Psoas muscle (tissue), 8 donors: ENCODE measurements at regions of chr2 and their contacts with region 1.

Region 1: DNA sequence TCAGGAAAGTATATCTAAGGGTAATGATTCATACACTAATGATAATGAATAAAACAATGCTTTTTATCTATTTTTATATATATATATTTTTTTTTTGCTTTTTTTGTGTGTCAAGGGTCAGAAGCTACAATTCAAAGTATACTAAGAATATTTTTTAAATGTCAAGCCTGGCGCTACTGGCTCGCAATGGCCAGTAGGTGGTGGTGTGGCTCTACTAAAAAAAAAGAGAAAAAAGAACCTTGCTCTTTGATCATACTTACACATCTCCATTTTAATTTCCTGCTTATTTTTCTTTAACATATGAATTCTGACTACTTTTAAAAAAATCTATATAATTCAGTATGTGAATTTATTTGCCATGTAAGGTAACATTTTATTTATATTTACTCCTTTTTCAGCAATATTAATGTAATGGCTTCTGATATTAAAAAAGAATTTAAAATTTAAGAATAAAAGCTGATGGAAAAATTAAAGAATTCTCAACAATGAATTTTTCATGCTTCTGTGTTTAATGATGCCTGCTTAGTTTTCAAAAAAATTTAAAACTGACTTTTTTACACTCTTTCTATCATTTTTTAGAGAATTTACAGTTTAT is 232.9 kb downstream of the GULP1 start:
- DNase-seq: no peak
- ATAC-seq: peak in 2 of 4 donors; percentile 51 to 56
- H3K4me3 ChIP-seq: no peak overlapping the region
- H3K27ac ChIP-seq: no peak overlapping the region
- H3K4me1 ChIP-seq: no peaks in the 10 kb centered on the region
- H3K27me3 ChIP-seq: no peaks in the 10 kb centered on the region
- CTCF ChIP-seq: peak; percentile 80

Region 2: GRCh38 chr2:188441288-188441947 is 83.2 kb before region 1 on chr2:
- intact Hi-C with region 1: no loop called
- DNase-seq: no peak
- ATAC-seq: no peak
- H3K4me3 ChIP-seq: no peak overlapping the region
- H3K27ac ChIP-seq: no peak overlapping the region
- H3K4me1 ChIP-seq: no peaks in the 10 kb centered on the region
- H3K27me3 ChIP-seq: no peaks in the 10 kb centered on the region
- CTCF ChIP-seq: no peak

Region 3: GRCh38 chr2:188607239-188607883 is 82.7 kb after region 1 on chr2:
- intact Hi-C with region 1: no loop called
- DNase-seq: no peak
- ATAC-seq: no peak
- H3K4me3 ChIP-seq: no peak overlapping the region
- H3K27ac ChIP-seq: no peak overlapping the region
- H3K4me1 ChIP-seq: no peaks in the 10 kb centered on the region
- H3K27me3 ChIP-seq: no peaks in the 10 kb centered on the region
- CTCF ChIP-seq: no peak

Region 4: GRCh38 chr2:188645986-188646385 is 121.4 kb after region 1 on chr2:
- intact Hi-C with region 1: no loop called
- DNase-seq: no peak
- ATAC-seq: no peak
- H3K4me3 ChIP-seq: no peak overlapping the region
- H3K27ac ChIP-seq: no peak overlapping the region
- H3K4me1 ChIP-seq: no peaks in the 10 kb centered on the region
- H3K27me3 ChIP-seq: no peaks in the 10 kb centered on the region
- CTCF ChIP-seq: no peak

Region 5: GRCh38 chr2:188678882-188679281 is 154.3 kb after region 1 on chr2:
- intact Hi-C with region 1: no loop called
- DNase-seq: no peak
- ATAC-seq: no peak
- H3K4me3 ChIP-seq: no peak overlapping the region
- H3K27ac ChIP-seq: no peak overlapping the region
- H3K4me1 ChIP-seq: no peaks in the 10 kb centered on the region
- H3K27me3 ChIP-seq: no peaks in the 10 kb centered on the region
- CTCF ChIP-seq: no peak

Region 6: DNA sequence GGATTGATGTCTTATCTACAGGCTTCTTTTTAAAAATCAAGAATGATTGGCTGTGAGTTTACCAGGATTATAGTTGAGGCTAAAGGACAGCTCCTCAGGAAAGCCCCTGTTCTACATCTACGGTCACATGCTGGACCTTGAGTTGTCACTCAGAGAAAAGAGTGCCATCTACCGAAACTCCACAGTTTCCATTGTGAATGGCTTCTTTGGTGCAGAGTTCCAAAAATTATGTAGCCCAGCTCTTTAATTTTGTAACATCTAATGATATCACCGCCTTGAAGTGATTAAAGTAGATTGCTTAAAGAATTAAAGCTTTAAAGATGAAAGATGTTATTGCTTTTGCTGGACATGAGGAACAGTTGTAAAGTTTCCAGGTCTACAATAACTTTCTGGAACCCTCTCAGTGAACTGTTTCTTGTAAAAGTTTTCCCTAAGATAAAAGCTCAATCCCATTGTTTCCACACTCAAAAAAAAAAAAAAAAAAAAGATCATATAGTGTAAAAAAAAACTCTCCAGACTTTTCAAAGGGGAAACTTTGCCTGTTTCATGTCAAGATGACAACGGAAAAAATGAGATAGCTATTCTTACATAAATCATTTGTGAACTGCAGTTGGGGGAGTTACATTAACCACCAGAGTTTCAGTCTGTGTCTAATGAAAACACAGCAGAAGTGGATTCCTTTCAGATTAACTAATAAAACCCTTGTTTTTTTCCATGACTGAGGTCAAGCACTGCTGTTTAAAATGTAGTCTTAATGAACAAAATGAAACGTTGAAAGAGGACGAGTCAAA is 453.9 kb after region 1 on chr2:
- intact Hi-C with region 1: loop called (anchors 2 to 10 kb)
- DNase-seq: no peak
- ATAC-seq: peak in 3 of 4 donors; percentile 41 to 58 (median 47)
- H3K4me3 ChIP-seq: peak overlapping the region; percentile 52
- H3K27ac ChIP-seq: peak overlapping the region; percentile 24
- H3K4me1 ChIP-seq: no peaks in the 10 kb centered on the region
- H3K27me3 ChIP-seq: no peaks in the 10 kb centered on the region
- CTCF ChIP-seq: peak; percentile 16

Region 7: DNA sequence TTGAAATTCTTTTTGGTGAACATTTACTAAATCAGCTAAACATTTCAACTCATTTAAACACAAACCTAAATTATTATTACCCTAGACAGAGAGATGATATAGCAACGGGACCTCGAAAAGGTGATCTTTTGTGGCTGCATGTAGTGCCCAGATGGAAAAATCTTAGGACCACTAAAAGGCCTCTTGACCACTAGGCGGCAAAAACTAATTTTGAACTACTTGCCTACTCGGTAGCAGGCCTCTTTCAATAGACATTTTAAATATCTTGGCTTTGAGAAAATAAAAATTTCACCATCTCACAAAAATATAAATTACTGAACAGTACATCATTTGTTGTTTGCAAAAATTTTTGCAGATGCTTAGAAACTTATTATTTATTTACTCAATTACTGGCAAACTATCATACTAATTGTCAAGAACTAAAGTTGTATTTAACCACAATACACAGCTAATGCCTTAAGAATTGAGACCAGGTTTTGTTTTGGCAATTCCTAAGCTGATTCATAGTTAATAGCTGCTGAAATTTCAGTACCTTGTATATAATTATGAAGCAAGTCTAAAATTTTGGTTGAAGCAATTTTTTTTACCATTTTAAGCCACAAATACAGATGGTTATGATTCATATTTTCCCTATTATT is 458.9 kb after region 1 on chr2:
- intact Hi-C with region 1: loop called (anchors 2 to 10 kb)
- DNase-seq: no peak
- ATAC-seq: peak in 3 of 4 donors; percentile 13 to 47 (median 30)
- H3K4me3 ChIP-seq: no peak overlapping the region
- H3K27ac ChIP-seq: no peak overlapping the region
- H3K4me1 ChIP-seq: no peaks in the 10 kb centered on the region
- H3K27me3 ChIP-seq: no peaks in the 10 kb centered on the region
- CTCF ChIP-seq: peak; percentile 23

Region 8: GRCh38 chr2:189412330-189412953 is 887.8 kb after region 1 on chr2:
- intact Hi-C with region 1: loop called (anchors 5 to 10 kb)
- DNase-seq: no peak
- ATAC-seq: peak; percentile 59 to 90 (median 70)
- H3K4me3 ChIP-seq: no peak overlapping the region
- H3K27ac ChIP-seq: no peak overlapping the region
- H3K4me1 ChIP-seq: no peaks in the 10 kb centered on the region
- H3K27me3 ChIP-seq: no peaks in the 10 kb centered on the region
- CTCF ChIP-seq: peak; percentile 78